ENCODE measurements at regions of chr9 and their contacts with region 1.

Region 1: DNA sequence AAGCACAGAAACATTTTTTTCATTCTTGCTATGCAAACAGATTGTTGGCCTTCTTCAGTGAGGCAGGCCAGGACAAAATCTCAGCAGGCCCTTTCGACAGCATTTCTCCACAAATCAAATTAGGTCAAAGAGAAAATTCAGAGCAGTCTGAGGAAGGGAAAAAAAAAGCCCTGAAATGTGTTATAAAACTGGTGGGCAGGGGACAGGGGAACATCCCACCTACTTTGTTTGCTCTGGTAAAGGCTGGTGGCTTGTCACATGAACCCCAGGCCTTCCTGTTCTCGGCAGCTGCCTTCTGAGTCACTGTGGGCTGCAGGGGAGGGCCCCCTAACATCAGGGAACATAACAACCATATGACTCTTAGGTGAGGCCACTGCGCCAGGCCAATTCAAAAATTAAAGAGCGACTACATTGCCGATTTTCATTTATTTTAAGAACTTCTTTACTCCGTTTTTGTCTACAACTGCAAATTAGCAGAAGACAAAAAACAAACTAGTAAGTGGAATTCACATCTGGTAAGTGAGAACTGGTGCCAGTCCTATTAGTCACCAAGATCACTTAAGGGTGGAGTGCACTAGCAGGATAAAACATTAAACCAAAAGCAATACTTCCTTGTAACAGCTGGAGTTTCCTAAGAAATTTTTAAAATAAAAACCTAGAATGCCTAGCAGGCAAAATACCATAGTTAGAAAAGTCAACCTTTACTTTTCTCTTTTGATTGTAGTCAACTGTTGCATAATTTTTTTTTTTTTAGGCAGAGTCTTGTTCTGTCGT is 46.2 kb upstream of the DENND4C start:
- DNase-seq: peak; percentile 69
- H3K4me3 Mint-ChIP-seq: peak overlapping the region; percentile 37
- H3K27ac Mint-ChIP-seq: peak overlapping the region; percentile 92
- H3K4me1 Mint-ChIP-seq: peaks cover 19% of the 10 kb centered on the region
- H3K27me3 Mint-ChIP-seq: no peaks in the 10 kb centered on the region

Region 2: DNA sequence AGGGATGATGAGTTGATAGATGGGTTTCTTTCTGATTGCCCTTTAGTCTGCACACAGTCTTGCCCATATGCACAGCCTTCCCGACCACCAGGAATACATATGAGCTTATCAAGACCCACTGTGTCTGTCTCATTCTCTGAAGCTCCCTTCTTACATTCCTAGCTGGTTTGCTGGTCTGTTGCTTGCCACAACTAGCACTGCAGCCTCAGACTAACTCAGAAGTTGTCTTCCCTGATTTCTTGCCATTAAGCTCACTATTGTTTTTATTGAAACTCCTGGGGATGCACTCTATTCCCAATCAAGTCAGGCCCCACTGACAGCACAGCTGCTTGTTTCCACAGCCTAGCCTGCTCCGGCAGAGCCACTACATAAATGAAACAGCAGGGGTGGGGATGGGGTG is 248.8 kb before region 1 on chr9:
- intact Hi-C with region 1: no loop called
- DNase-seq: no peak
- H3K4me3 Mint-ChIP-seq: no peak overlapping the region
- H3K27ac Mint-ChIP-seq: no peak overlapping the region
- H3K4me1 Mint-ChIP-seq: no peaks in the 10 kb centered on the region
- H3K27me3 Mint-ChIP-seq: peaks cover 2% of the 10 kb centered on the region

Region 3: DNA sequence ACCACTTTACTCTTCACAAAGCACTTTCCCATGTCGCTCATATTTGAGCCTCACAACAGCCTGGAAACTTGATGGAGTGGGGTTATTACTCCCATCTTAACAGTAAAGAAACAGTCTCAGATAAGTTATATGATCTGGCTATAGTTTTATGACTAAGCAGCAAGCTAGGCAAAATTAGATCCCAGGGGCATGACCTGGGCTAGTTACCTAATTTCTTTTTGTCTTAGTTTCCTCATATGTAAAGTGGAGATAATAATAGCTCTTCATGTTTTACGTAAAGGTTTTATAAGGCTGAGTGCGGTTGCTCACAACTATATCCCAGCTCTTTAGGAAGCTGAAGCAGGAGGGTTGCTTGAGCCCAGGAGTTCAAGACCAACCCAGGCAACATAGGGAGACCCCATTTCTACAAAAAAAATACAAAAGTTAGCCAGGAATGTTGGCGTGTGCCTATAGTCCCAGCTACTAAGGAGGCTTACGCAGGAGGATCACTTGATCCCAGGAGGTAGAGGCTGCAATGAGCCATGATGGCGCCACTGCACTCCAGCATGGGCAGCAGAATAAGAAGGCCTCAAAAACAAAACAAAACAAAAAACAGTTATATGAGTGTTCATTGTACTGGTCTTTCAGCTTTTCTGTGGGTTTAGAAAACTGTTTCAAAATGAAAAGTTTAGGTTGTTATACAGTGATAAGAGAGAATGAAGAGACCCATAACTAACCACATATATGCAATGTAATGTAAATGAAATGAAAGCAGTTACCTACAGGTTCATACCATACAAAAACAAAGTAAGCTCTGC is 50.6 kb before region 1 on chr9:
- intact Hi-C with region 1: loop called (anchors 1 kb)
- DNase-seq: no peak
- H3K4me3 Mint-ChIP-seq: no peak overlapping the region
- H3K27ac Mint-ChIP-seq: peak overlapping the region; percentile 73
- H3K4me1 Mint-ChIP-seq: peaks cover 45% of the 10 kb centered on the region
- H3K27me3 Mint-ChIP-seq: no peaks in the 10 kb centered on the region

Region 4: DNA sequence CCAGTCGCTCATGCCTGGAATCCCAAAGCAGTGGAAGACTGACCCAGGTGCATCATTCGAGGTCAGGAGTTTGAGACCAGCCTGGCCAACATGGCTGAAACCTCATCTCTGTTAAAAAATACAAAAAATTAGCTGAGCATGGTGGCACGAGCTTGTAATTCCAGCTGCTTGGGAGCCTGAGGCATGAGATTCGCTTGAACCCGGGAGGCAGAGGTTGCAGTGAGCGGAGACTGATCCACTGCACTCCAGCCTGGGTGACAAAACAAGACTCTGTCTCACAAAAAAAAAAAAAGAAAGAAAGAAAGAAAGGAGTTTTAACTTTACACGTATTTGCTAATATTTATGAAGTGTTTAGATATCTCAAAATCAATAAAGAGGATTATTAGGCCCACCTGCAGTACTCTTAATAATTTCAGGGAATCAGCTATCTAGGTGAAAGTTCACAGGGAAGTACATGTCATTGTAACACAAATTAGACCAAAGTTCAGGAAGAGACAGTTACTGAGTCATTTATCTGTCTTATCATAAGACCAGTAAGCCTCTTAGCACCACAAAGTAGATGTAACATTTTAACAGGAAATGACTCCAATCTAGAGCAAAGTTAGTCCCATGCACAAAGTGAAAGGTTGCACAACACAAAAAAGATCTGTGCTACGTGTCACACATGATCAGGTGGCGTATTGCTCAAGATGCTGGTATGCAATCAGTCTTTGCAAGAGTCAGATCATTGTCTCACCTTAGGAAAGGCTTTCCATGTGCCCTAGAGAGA is 22.9 kb before region 1 on chr9:
- intact Hi-C with region 1: loop called (anchors 1 kb)
- DNase-seq: peak; percentile 56
- H3K4me3 Mint-ChIP-seq: peak overlapping the region; percentile 33
- H3K27ac Mint-ChIP-seq: peak overlapping the region; percentile 89
- H3K4me1 Mint-ChIP-seq: peaks cover 16% of the 10 kb centered on the region
- H3K27me3 Mint-ChIP-seq: no peaks in the 10 kb centered on the region

Region 5: GRCh38 chr9:19199012-19199411 is 14.7 kb after region 1 on chr9:
- intact Hi-C with region 1: loop called (anchors 2 kb)
- DNase-seq: no peak
- H3K4me3 Mint-ChIP-seq: no peak overlapping the region
- H3K27ac Mint-ChIP-seq: peak overlapping the region; percentile 49
- H3K4me1 Mint-ChIP-seq: peaks cover 15% of the 10 kb centered on the region
- H3K27me3 Mint-ChIP-seq: no peaks in the 10 kb centered on the region

Region 6: GRCh38 chr9:19230356-19231125 is 46.2 kb after region 1 on chr9 and contains the start of gene DENND4C:
- intact Hi-C with region 1: loop called (anchors 1 kb)
- DNase-seq: peak; percentile 82
- H3K4me3 Mint-ChIP-seq: peak within 1 kb of the TSS; percentile 76
- H3K27ac Mint-ChIP-seq: peak within 1 kb of the TSS; percentile 69
- H3K4me1 Mint-ChIP-seq: peaks cover 12% of the 10 kb centered on the region
- H3K27me3 Mint-ChIP-seq: no peaks in the 10 kb centered on the region
- total RNA-seq, gene DENND4C: 19.0 and 25.0 TPM in 2 replicates

Region 7: GRCh38 chr9:19286634-19287200 is 102.4 kb after region 1 on chr9:
- intact Hi-C with region 1: no loop called
- DNase-seq: no peak
- H3K4me3 Mint-ChIP-seq: no peak overlapping the region
- H3K27ac Mint-ChIP-seq: no peak overlapping the region
- H3K4me1 Mint-ChIP-seq: peaks cover 3% of the 10 kb centered on the region
- H3K27me3 Mint-ChIP-seq: no peaks in the 10 kb centered on the region

Region 8: DNA sequence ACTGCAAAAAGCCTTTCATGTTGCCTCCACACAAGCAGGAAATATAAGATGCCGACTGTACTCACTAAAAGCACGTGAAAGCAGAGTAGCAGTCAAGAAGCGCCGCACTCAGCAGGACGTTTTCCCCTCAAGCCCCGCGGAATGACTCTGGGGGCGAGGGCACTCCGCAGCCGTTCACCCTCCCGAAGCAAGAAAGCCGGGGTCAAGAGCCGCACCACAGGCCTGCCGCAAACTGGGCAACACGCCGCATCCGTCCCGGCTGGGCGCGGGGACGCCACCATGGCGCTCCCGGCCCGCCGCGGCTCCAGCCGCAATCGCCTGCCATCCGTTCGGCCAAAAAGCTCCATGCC is 195.3 kb after region 1 on chr9:
- intact Hi-C with region 1: loop called (anchors 1 kb)
- DNase-seq: no peak
- H3K4me3 Mint-ChIP-seq: peak overlapping the region; percentile 96
- H3K27ac Mint-ChIP-seq: peak overlapping the region; percentile 98
- H3K4me1 Mint-ChIP-seq: peaks cover 38% of the 10 kb centered on the region
- H3K27me3 Mint-ChIP-seq: no peaks in the 10 kb centered on the region